ENCODE measurements at regions of chr1 and their contacts with region 1.

Region 1: GRCh38 chr1:40868051-40868794 is 6.1 kb upstream of the CITED4 start:
- DNase-seq: peak; percentile 83
- H3K4me3 Mint-ChIP-seq: no peak overlapping the region
- H3K27ac Mint-ChIP-seq: peak overlapping the region; percentile 77
- H3K4me1 Mint-ChIP-seq: peaks cover 28% of the 10 kb centered on the region
- H3K27me3 Mint-ChIP-seq: no peaks in the 10 kb centered on the region
- CTCF ChIP-seq: no peak

Region 2: DNA sequence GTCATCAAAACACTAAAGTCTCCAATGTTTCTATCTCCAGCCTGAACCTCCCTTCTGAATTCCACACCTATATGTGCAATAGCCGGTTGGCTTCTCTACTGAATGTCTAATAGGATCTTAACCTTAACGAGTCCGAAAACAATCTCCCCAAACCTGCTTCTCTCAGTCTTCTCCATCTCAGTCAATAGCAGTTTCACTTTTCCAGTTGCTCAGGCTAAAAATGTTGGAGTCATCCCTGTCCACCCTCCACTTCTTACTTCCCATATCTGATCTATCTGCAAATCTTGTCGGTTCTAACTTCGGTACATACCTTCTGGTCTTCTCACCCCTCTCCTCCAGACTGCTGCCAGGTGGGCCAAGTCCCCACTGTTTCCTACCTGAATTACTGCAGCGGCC is 19.4 kb after region 1 on chr1:
- CTCF ChIA-PET with region 1: interaction called, 3 read pairs
- POLR2A ChIA-PET with region 1: interaction called, 11 read pairs
- intact Hi-C with region 1: no loop called
- DNase-seq: no peak
- H3K4me3 Mint-ChIP-seq: no peak overlapping the region
- H3K27ac Mint-ChIP-seq: peak overlapping the region; percentile 84
- H3K4me1 Mint-ChIP-seq: peaks cover 20% of the 10 kb centered on the region
- H3K27me3 Mint-ChIP-seq: no peaks in the 10 kb centered on the region
- CTCF ChIP-seq: no peak